Aorta (tissue), 5 donors: ENCODE measurements at regions of chr11 and their contacts with region 1.

Region 1: GRCh38 chr11:82900277-82901164 is at the start of gene PRCP:
- DNase-seq: peak; percentile 97
- ATAC-seq: peak; percentile 96
- H3K4me3 ChIP-seq: peak within 1 kb of the TSS; percentile 51 to 62
- H3K27ac ChIP-seq: peak within 1 kb of the TSS; percentile 43 to 69
- H3K4me1 ChIP-seq: peaks cover 0 to 2% of the 10 kb centered on the region in 2 donors
- H3K27me3 ChIP-seq: no peaks in the 10 kb centered on the region
- total RNA-seq, gene PRCP: 93.7 to 183 TPM

Region 2: DNA sequence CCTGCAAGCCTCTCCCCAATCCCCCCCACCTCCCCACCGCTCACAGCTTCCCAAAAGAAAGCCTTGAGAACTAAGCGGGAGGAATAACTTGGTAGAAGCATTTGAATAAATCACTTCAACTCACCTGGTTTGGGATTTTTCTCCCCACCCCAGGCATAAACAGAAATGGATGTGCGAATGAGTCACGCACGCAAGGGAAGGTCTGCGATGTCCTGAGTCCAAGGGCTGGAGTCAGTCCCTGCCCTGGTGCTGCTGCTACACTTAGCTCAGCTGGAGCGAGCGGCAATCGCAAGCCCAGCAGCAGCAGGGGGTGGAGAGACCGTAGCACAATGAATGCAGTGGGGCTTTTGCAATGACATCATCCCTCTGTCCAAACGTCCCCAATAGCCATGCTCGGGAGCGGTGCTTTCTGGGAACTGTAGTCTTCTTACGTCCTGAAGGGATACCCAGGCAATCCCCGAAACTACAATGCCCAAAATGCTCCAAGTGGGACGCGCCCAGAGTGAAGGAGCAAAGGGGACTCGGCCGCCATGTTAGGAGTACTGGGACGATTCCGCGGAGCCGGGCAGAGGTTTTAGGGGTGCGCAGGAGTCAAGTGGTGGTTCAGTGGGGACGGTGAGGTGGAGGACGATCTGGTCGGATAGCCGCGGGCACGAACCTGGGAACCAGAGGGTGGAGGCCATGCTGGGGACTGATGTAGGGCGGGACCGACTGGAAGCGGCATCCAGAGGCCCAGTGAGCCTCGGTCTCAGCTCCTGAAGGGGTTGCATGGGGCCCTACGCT is 171.2 kb after region 1 on chr11 and contains the start of gene RAB30:
- intact Hi-C with region 1: loop called (anchors 5 to 10 kb)
- DNase-seq: peak; percentile 94 to 98
- ATAC-seq: peak; percentile 97
- H3K4me3 ChIP-seq: peak within 1 kb of the TSS; percentile 76 to 88
- H3K27ac ChIP-seq: peak within 1 kb of the TSS; percentile 86 to 92
- H3K4me1 ChIP-seq: peaks cover 2 to 5% of the 10 kb centered on the region in 2 donors
- H3K27me3 ChIP-seq: no peaks in the 10 kb centered on the region
- total RNA-seq, gene RAB30: 20.3 to 44.1 TPM

Region 3: GRCh38 chr11:83162377-83162776 is 261.9 kb after region 1 on chr11:
- intact Hi-C with region 1: loop called (anchors 2 to 10 kb)
- DNase-seq: no peak
- ATAC-seq: no peak
- H3K4me3 ChIP-seq: no peak overlapping the region
- H3K27ac ChIP-seq: no peak overlapping the region
- H3K4me1 ChIP-seq: no peaks in the 10 kb centered on the region
- H3K27me3 ChIP-seq: no peaks in the 10 kb centered on the region

Region 4: GRCh38 chr11:83249972-83250593 is 349.6 kb after region 1 on chr11:
- intact Hi-C with region 1: loop called (anchors 5 kb)
- DNase-seq: no peak
- ATAC-seq: no peak
- H3K4me3 ChIP-seq: no peak overlapping the region
- H3K27ac ChIP-seq: no peak overlapping the region
- H3K4me1 ChIP-seq: peaks cover 0 to 3% of the 10 kb centered on the region in 2 donors
- H3K27me3 ChIP-seq: no peaks in the 10 kb centered on the region

Region 5: GRCh38 chr11:83724008-83724461 is 823.5 kb after region 1 on chr11:
- intact Hi-C with region 1: loop called in 1 of 2 experiments (anchors 10 kb)
- DNase-seq: no peak
- ATAC-seq: peak; percentile 64
- H3K4me3 ChIP-seq: peak overlapping the region; percentile 47 to 69
- H3K27ac ChIP-seq: no peak overlapping the region
- H3K4me1 ChIP-seq: no peaks in the 10 kb centered on the region
- H3K27me3 ChIP-seq: no peaks in the 10 kb centered on the region